IMR-90 (cell line): ENCODE measurements at regions of chr6 and their contacts with region 1.

Region 1: DNA sequence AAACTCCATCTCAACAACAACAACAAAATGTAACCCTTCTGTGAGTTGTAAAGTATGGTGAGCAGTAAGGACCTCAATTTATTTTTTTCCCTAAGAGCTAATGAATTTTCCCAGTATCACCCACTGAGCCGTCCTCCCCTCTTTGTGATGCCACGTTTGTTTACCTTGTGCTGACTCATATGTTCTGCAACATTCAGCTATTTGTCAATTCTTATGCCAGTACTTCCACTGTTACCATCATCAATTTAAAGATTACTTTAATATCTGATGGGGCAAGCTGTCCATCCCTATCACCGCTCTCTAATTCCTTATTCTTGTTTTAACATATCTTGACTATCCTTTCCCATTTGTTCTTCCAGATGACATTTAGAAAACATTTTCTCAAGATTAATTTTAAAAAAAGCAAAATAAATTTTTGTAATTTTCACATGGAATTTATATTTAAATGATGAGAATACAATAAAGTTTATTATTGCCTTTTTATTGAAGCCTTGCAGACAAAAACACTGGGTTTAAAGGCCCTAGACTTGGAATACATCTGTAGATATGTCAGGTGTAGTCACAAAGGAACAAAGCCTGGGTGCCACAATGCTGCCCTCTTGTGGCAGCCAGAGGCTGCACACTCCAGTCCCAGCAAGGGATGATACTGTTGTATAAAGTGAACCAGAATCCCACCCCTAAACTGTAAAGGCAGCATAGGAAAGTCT is 37.4 kb downstream of the MAK start:
- DNase-seq: peak; percentile 60
- ATAC-seq: peak; percentile 99
- H3K4me3 ChIP-seq: no peak overlapping the region
- H3K27ac ChIP-seq: no peak overlapping the region
- H3K4me1 ChIP-seq: no peaks in the 10 kb centered on the region
- H3K27me3 ChIP-seq: no peaks in the 10 kb centered on the region
- CTCF ChIP-seq: peak; percentile 93
- POLR2A ChIP-seq: no peak
- RAD21 ChIP-seq: peak; percentile 90

Region 2: DNA sequence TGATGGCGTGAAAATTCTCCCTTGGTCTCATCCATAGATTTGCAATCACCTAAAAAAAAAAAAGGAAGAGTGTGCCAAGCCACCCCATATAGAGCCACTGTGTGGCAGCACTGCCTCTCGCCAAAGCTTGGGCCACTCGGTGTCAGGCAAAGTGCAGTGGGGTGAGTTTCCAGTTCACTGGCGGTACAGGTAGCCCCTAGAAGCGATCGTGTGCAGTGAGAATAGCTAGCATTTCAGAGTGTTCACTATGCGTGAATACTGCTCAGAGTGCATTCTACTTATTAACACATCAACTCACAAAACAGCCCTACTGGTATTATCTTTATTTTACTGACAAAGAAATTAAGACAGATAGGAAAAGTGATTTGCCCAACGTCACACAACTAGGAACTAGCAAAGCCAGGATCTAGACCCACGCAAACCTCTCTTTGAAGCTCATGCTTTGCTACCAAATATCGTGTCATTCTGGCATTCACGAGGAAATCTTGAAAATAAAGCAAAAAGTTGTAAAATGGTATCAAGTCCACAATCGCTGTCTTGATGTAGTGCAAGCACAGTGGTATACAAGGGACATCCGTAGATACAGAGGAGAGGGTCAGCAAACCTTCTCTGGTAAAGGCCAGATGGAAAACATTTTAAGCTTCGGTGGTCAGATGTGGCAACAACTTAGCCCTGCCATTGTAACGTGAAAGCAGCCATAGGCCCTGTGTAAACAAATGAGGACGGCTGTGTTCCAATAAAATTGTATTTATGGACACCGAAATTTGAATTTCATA is 290.2 kb before region 1 on chr6:
- CTCF ChIA-PET with region 1: interaction called, 3 read pairs
- POLR2A ChIA-PET with region 1: no interaction called
- dilution Hi-C with region 1: no loop called
- in situ Hi-C with region 1: no loop called
- intact Hi-C with region 1: loop called (anchors 1 kb)
- DNase-seq: peak; percentile 15
- ATAC-seq: peak; percentile 92
- H3K4me3 ChIP-seq: no peak overlapping the region
- H3K27ac ChIP-seq: no peak overlapping the region
- H3K4me1 ChIP-seq: no peaks in the 10 kb centered on the region
- H3K27me3 ChIP-seq: no peaks in the 10 kb centered on the region
- CTCF ChIP-seq: peak; percentile 48
- POLR2A ChIP-seq: no peak
- RAD21 ChIP-seq: peak; percentile 61

Region 3: GRCh38 chr6:10722820-10723566 is 78.0 kb before region 1 on chr6 and contains the start of gene TMEM14C:
- CTCF ChIA-PET with region 1: no interaction called
- POLR2A ChIA-PET with region 1: no interaction called
- dilution Hi-C with region 1: no loop called
- in situ Hi-C with region 1: no loop called
- intact Hi-C with region 1: loop called (anchors 5 kb)
- DNase-seq: peak; percentile 99
- ATAC-seq: peak; percentile 97
- H3K4me3 ChIP-seq: peak within 1 kb of the TSS; percentile 91
- H3K27ac ChIP-seq: peak within 1 kb of the TSS; percentile 91
- H3K4me1 ChIP-seq: peaks cover 8% of the 10 kb centered on the region
- H3K27me3 ChIP-seq: no peaks in the 10 kb centered on the region
- CTCF ChIP-seq: no peak
- POLR2A ChIP-seq: peak; percentile 89
- RAD21 ChIP-seq: 0 out of 2 replicates have a peak, but pooled peaks have one; percentile 4
- total RNA-seq, gene TMEM14C: 129 and 141 TPM in 2 replicates

Region 4: GRCh38 chr6:11064836-11065235 is 263.9 kb after region 1 on chr6:
- CTCF ChIA-PET with region 1: interaction called, 3 read pairs
- POLR2A ChIA-PET with region 1: no interaction called
- dilution Hi-C with region 1: no loop called
- in situ Hi-C with region 1: no loop called
- intact Hi-C with region 1: loop called (anchors 1 kb)
- DNase-seq: no peak
- ATAC-seq: no peak
- H3K4me3 ChIP-seq: no peak overlapping the region
- H3K27ac ChIP-seq: no peak overlapping the region
- H3K4me1 ChIP-seq: no peaks in the 10 kb centered on the region
- H3K27me3 ChIP-seq: peaks cover 9% of the 10 kb centered on the region
- CTCF ChIP-seq: no peak
- POLR2A ChIP-seq: no peak
- RAD21 ChIP-seq: no peak